GM12878 (cell line): ENCODE measurements at regions of chr6 and their contacts with region 1.

Region 1: GRCh38 chr6:32971581-32972352 is 3.4 kb downstream of the BRD2 start:
- DNase-seq: peak; percentile 100
- ATAC-seq: peak; percentile 46
- H3K4me3 ChIP-seq: peak overlapping the region; percentile 93
- H3K27ac ChIP-seq: peak overlapping the region; percentile 100
- H3K4me1 ChIP-seq: peaks cover 1% of the 10 kb centered on the region; the same call in 1 of the 2 replicates
- H3K27me3 ChIP-seq: no peaks in the 10 kb centered on the region
- CTCF ChIP-seq: no peak
- EP300 ChIP-seq: peak; percentile 37; a peak in 2 of 4 replicates
- POLR2A ChIP-seq: peak; percentile 70
- RAD21 ChIP-seq: no peak

Region 2: GRCh38 chr6:32843979-32844838 is 127.6 kb before region 1 on chr6 and contains the start of gene PSMB8:
- CTCF ChIA-PET with region 1: interaction called, 17 read pairs
- POLR2A ChIA-PET with region 1: interaction called, 29 read pairs
- RAD21 ChIA-PET with region 1: interaction called, 29 read pairs
- SMC1A ChIA-PET with region 1: interaction called, 13 read pairs
- in situ Hi-C with region 1: no loop called
- intact Hi-C with region 1: loop called (anchors 5 kb)
- DNase-seq: peak; percentile 98
- ATAC-seq: peak; percentile 75
- H3K4me3 ChIP-seq: peak within 1 kb of the TSS; percentile 96
- H3K27ac ChIP-seq: peak within 1 kb of the TSS; percentile 96
- H3K4me1 ChIP-seq: peaks cover 67% of the 10 kb centered on the region
- H3K27me3 ChIP-seq: no peaks in the 10 kb centered on the region
- CTCF ChIP-seq: no peak
- EP300 ChIP-seq: peak in 1 of 2 experiments; percentile 57; a peak in 1 of 4 replicates
- POLR2A ChIP-seq: peak; percentile 81
- RAD21 ChIP-seq: no peak
- polyA plus RNA-seq, gene PSMB8: 353 to 557 TPM

Region 3: GRCh38 chr6:32894080-32895005 is 77.4 kb before region 1 on chr6:
- CTCF ChIA-PET with region 1: no interaction called
- POLR2A ChIA-PET with region 1: interaction called, 18 read pairs
- RAD21 ChIA-PET with region 1: interaction called, 12 read pairs
- SMC1A ChIA-PET with region 1: interaction called, 7 read pairs
- in situ Hi-C with region 1: no loop called
- intact Hi-C with region 1: no loop called
- DNase-seq: peak; percentile 91
- ATAC-seq: peak; percentile 98
- H3K4me3 ChIP-seq: peak overlapping the region; percentile 81
- H3K27ac ChIP-seq: peak overlapping the region; percentile 90
- H3K4me1 ChIP-seq: peaks cover 12% of the 10 kb centered on the region
- H3K27me3 ChIP-seq: no peaks in the 10 kb centered on the region
- CTCF ChIP-seq: no peak; a peak in 1 of 6 replicates
- EP300 ChIP-seq: no peak
- POLR2A ChIP-seq: peak; percentile 83
- RAD21 ChIP-seq: no peak

Region 4: GRCh38 chr6:32947552-32948465 is 24.0 kb before region 1 on chr6:
- CTCF ChIA-PET with region 1: interaction called, 243 read pairs
- POLR2A ChIA-PET with region 1: interaction called, 486 read pairs
- RAD21 ChIA-PET with region 1: interaction called, 224 read pairs
- SMC1A ChIA-PET with region 1: interaction called, 347 read pairs
- in situ Hi-C with region 1: no loop called
- intact Hi-C with region 1: loop called (anchors 2 kb)
- DNase-seq: peak; percentile 56
- ATAC-seq: peak; percentile 13; the same call in 2 of the 3 replicates
- H3K4me3 ChIP-seq: peak overlapping the region; percentile 22
- H3K27ac ChIP-seq: peak overlapping the region; percentile 59
- H3K4me1 ChIP-seq: peaks cover 55% of the 10 kb centered on the region
- H3K27me3 ChIP-seq: no peaks in the 10 kb centered on the region
- CTCF ChIP-seq: peak; percentile 69 to 88 (median 82)
- EP300 ChIP-seq: no peak
- POLR2A ChIP-seq: no peak
- RAD21 ChIP-seq: peak; percentile 92

Region 5: GRCh38 chr6:33029328-33030184 is 57.8 kb after region 1 on chr6:
- CTCF ChIA-PET with region 1: interaction called, 8 read pairs
- POLR2A ChIA-PET with region 1: interaction called, 30 read pairs
- RAD21 ChIA-PET with region 1: interaction called, 10 read pairs
- SMC1A ChIA-PET with region 1: interaction called, 4 read pairs
- in situ Hi-C with region 1: no loop called
- intact Hi-C with region 1: loop called (anchors 2 kb)
- DNase-seq: peak; percentile 94
- ATAC-seq: peak; percentile 89
- H3K4me3 ChIP-seq: peak overlapping the region; percentile 49
- H3K27ac ChIP-seq: peak overlapping the region; percentile 100
- H3K4me1 ChIP-seq: peaks cover 36% of the 10 kb centered on the region
- H3K27me3 ChIP-seq: no peaks in the 10 kb centered on the region
- CTCF ChIP-seq: peak in 2 of 3 experiments; percentile 4 to 22; a peak in 1 of 6 replicates
- EP300 ChIP-seq: peak; percentile 86 to 88
- POLR2A ChIP-seq: peak; percentile 83
- RAD21 ChIP-seq: peak; percentile 31; the same call in 1 of the 2 replicates